Left ventricle myocardium superior (tissue), 1 donor: ENCODE measurements at regions of chr20 and their contacts with region 1.

Region 1: GRCh38 chr20:41095110-41095969 is 42.0 kb upstream of the PLCG1 start:
- DNase-seq: peak; percentile 67
- ATAC-seq: peak; percentile 79

Region 2: DNA sequence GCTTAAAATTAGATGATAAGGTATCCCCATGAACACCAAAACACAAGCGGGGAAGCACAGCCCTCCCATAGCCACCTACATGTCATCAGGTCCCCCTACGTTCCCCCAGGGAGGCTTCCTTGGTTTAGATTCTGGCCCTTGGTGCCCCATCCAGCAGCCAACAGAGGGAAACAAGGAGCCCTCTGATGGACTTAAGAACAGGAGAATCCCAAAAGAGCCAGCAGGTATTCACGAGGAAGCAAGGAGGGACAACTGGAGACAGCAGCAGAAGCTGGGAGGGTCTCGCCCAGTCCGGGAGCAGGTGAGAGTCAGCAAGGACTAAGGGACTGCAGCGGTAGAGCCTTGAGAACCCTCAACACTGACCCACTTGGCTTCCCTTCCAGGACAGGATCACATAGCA is 125.1 kb before region 1 on chr20:
- intact Hi-C with region 1: loop called (anchors 5 kb)
- DNase-seq: no peak
- ATAC-seq: no peak